Vagina (tissue), 2 donors: ENCODE measurements at regions of chr10 and their contacts with region 1.

Region 1: DNA sequence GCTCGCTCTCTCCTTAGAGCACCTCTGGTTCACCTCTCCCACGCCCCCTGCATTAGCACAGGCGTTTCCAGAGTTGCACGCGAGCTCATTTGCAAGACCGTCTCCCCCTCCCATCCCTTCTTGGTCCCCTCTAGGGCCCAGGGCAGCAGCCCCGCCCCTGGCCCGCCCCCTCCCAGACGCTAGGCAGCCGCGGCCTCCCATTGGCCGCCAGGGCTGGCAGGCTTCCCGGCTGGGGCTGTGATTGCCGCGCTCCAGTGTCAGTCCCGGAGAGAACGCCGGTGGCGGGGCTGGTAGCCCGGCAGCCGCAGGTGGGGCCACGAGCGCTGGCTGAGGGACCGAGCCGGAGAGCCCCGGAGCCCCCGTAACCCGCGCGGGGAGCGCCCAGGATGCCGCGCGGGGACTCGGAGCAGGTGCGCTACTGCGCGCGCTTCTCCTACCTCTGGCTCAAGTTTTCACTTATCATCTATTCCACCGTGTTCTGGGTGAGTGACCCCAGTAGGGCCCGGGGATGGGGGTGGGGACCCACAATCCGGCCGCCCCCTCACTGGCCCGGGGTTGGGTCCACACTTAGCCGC is at the start of gene TSPAN15:
- DNase-seq: no peak
- H3K4me3 ChIP-seq: peak within 1 kb of the TSS; percentile 69 to 76
- H3K27ac ChIP-seq: peak within 1 kb of the TSS; percentile 53
- H3K4me1 ChIP-seq: peaks cover 54% of the 10 kb centered on the region
- H3K27me3 ChIP-seq: no peaks in the 10 kb centered on the region
- CTCF ChIP-seq: no peak
- POLR2A ChIP-seq: peak in 1 of 2 donors; percentile 19
- total RNA-seq, gene TSPAN15: 26.5 TPM

Region 2: DNA sequence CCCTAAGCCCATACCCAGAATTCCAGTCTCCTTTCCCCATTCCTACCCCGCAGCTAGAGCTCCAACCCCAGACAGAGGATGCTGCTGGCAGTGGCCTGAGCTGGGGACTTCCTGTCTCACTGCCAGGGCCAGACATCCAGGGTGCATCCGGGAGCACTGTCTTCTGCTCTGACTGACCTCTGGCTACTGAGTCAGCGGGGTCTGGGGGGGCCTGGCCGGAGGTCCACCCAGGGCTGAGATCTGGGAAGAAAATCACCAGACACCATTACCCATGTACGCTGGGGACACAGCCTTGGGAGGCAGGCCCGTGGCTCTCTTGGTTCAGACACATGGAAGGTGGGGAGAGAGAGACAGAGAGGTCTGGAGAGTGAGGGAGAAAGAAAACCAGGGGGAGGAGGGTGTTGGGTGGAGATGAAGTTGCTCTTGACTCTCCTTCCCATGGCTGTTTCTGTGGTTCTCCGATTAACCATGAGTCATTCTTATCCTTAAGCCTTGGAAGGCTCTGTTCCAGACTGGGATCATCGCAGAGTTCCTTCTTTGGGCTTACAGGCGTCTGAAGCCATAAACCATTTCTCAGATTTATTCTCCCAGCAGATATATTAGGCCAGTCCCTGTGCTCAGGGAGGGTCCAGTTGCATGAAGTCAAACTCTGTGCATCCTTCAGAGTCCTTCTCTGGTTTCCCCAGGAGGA is 23.6 kb after region 1 on chr10:
- intact Hi-C with region 1: no loop called
- DNase-seq: no peak
- H3K4me3 ChIP-seq: no peak overlapping the region
- H3K27ac ChIP-seq: peak overlapping the region; percentile 34
- H3K4me1 ChIP-seq: peaks cover 42% of the 10 kb centered on the region
- H3K27me3 ChIP-seq: no peaks in the 10 kb centered on the region
- CTCF ChIP-seq: no peak
- POLR2A ChIP-seq: no peak

Region 3: GRCh38 chr10:71234970-71235685 is 1783.8 kb after region 1 on chr10:
- intact Hi-C with region 1: loop called (anchors 5 kb)
- DNase-seq: no peak
- H3K4me3 ChIP-seq: peak overlapping the region in 1 of 2 donors; percentile 17
- H3K27ac ChIP-seq: peak overlapping the region; percentile 71
- H3K4me1 ChIP-seq: peaks cover 100% of the 10 kb centered on the region
- H3K27me3 ChIP-seq: no peaks in the 10 kb centered on the region
- CTCF ChIP-seq: no peak
- POLR2A ChIP-seq: no peak